Astrocyte of the cerebellum (primary cell): ENCODE measurements at regions of chr12 and their contacts with region 1.

Region 1: DNA sequence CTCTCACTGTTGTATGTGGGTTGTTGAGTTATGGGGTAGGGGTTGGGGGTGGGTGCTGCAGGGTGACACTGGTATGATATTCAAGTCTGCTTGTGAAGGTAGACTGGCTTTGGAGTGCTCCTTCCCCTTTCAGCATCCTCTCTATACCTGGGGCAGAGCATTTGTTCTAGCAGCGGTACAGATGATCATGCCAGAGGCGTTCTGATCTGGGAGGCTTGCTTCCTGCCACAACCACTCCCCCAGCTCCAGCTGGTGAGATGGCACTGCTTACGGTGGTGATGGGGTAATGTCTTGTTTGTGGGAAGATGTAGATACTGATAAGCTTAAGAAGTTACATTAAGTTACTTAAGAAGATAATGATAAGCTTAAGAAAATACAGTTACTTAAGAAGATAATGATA is 131.8 kb downstream of the ERC1 start:
- DNase-seq: no peak
- H3K4me3 ChIP-seq: no peak overlapping the region
- CTCF ChIP-seq: no peak

Region 2: GRCh38 chr12:1587927-1588574 is 465.3 kb after region 1 on chr12:
- in situ Hi-C with region 1: loop called (anchors 5 kb)
- DNase-seq: no peak
- H3K4me3 ChIP-seq: no peak overlapping the region
- CTCF ChIP-seq: no peak